GM12878 (cell line): ENCODE measurements at regions of chr1 and their contacts with region 1.

Region 1: DNA sequence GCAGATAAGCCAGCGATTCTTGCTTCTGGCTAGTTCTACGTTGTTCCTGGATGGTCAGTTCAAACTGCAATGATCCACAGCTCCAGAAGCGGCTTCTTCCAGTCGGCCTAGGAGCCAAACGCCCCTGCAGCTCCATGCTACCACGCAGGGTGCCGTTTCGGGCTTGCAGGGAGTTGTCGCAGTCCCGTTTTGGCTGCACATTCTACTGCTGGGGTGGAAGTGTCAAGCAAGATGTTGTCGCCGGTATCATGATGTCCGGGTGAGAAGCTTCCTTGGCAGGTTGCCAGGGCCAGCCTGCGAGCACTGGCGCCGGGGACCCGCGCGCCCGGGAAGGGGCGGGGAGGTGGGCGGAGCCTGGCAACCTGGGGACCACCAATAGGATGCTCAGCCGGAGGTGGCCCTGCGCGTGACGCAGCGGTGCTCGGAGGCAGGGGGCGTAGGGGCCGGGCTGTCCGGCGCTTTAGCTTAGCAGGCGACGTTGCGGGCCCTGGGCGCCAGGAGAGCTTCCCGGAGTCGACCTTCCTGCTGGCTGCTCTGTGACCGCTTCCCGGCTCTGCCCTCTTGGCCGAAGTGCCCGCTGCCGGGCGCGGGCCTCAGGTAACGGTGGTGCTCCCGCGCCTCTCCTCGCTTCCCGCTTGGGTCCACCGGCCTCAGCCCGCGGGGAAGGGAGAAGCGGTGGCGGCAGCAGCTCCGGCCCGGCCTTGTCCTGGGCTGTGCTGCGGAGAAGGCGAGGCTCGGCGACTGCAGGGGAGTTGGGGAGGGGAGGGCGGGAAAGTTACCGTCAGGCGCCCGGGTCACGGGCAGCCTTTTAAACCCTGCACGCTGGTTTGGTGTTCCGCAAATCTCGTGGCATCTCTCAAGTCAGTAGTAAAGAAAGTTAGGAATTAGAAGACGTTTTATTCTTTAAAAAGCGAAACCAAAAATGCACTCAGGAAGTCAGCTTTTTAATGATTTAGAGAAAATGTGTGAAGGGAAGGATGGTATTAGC is at the start of gene SOAT1:
- DNase-seq: peak; percentile 63
- ATAC-seq: peak; percentile 94
- H3K4me3 ChIP-seq: peak within 1 kb of the TSS; percentile 100
- H3K27ac ChIP-seq: peak within 1 kb of the TSS; percentile 78
- H3K4me1 ChIP-seq: no peaks in the 10 kb centered on the region
- H3K27me3 ChIP-seq: no peaks in the 10 kb centered on the region
- CTCF ChIP-seq: 0 out of 6 replicates have a peak, but pooled peaks of 1 of the 3 experiments have one; percentile 14
- EP300 ChIP-seq: no peak
- POLR2A ChIP-seq: peak; percentile 89
- RAD21 ChIP-seq: no peak
- polyA plus RNA-seq, gene SOAT1: 8.6 to 12.5 TPM

Region 2: GRCh38 chr1:179121159-179121938 is 172.3 kb before region 1 on chr1:
- CTCF ChIA-PET with region 1: interaction called, 47 read pairs
- POLR2A ChIA-PET with region 1: interaction called, 3 read pairs
- RAD21 ChIA-PET with region 1: interaction called, 17 read pairs
- SMC1A ChIA-PET with region 1: interaction called, 24 read pairs
- in situ Hi-C with region 1: no loop called
- intact Hi-C with region 1: loop called (anchors 1 kb)
- DNase-seq: no peak
- ATAC-seq: peak; percentile 67
- H3K4me3 ChIP-seq: no peak overlapping the region
- H3K27ac ChIP-seq: no peak overlapping the region
- H3K4me1 ChIP-seq: no peaks in the 10 kb centered on the region
- H3K27me3 ChIP-seq: no peaks in the 10 kb centered on the region
- CTCF ChIP-seq: peak; percentile 58 to 62 (median 61)
- EP300 ChIP-seq: no peak
- POLR2A ChIP-seq: no peak
- RAD21 ChIP-seq: peak; percentile 79

Region 3: DNA sequence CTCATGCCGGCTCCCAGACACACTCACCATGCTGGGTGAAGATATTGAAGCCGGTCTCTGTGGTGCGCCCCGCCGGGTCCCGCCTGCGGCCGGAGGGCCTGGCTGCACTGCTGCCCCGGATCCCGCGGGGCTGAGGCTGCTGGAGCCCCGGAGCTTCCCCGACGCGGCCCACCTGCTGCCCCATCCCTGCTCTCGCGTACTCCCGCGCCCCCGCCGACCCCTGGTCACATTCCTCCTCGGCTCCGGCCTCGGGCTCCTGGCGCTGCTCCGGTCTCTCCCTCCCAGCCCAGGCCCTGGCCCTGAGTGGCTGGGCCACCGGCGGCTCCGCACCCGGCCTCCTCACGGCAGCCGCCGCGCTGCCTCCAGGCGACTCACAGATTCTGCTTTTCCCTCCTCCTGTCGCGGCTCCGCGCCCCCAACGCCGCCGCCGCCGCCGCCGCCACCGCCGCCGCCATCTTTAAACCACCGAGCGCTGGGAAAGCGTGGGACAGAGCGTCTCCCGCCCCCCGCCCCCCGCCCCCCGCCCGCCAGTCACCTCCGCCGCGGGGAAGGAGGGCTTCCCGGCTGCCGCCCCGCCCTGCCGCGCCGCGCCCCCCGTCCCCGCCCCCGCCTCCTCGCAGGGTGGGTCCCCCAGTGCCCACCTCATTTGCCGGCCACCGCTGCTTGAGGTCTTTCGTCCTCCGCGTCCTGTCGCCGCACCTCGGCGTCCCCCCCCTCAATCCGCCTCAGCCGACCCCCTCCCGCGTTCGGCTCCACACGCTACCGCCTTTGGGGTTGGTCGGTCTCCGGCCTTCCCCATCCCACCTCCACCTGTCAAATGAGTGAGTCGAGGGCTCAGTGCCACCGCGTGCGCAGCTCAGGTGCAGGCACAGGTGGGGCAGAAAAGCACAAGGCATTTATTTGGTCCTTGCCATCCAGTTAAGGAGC is 64.2 kb before region 1 on chr1 and contains the start of gene ABL2:
- CTCF ChIA-PET with region 1: interaction called, 3 read pairs
- POLR2A ChIA-PET with region 1: no interaction called
- RAD21 ChIA-PET with region 1: interaction called, 4 read pairs
- SMC1A ChIA-PET with region 1: interaction called, 4 read pairs
- in situ Hi-C with region 1: no loop called
- intact Hi-C with region 1: loop called (anchors 5 kb)
- DNase-seq: no peak
- ATAC-seq: peak; percentile 80
- H3K4me3 ChIP-seq: peak within 1 kb of the TSS; percentile 88
- H3K27ac ChIP-seq: peak within 1 kb of the TSS; percentile 58
- H3K4me1 ChIP-seq: no peaks in the 10 kb centered on the region
- H3K27me3 ChIP-seq: no peaks in the 10 kb centered on the region
- CTCF ChIP-seq: no peak
- EP300 ChIP-seq: no peak
- POLR2A ChIP-seq: peak; percentile 65; the same call in 1 of the 2 replicates
- RAD21 ChIP-seq: no peak
- polyA plus RNA-seq, gene ABL2: 0.57 to 1.2 TPM

Region 4: DNA sequence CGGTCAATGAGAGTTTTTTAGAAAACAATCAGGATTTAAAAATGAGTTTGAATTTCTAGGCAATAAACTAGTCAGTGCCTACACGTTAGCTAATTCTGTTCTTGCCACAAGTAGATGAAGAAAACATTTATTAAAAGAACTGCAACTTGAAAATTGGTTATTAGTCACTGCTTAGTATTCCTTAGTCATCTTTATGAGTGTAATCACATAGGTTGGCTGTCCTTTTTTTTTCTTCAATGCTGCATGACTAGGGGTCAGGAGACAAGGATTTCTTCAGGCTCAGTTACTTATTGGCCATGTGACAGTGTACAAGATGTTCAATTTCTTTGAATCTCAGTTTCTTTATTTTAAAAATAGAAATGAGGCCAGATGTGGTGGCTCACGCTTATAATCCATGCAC is 17.1 kb after region 1 on chr1:
- CTCF ChIA-PET with region 1: interaction called, 6 read pairs
- POLR2A ChIA-PET with region 1: interaction called, 11 read pairs
- RAD21 ChIA-PET with region 1: no interaction called
- SMC1A ChIA-PET with region 1: interaction called, 21 read pairs
- in situ Hi-C with region 1: no loop called
- intact Hi-C with region 1: no loop called
- DNase-seq: no peak
- ATAC-seq: peak; percentile 15; the same call in 1 of the 3 replicates
- H3K4me3 ChIP-seq: no peak overlapping the region
- H3K27ac ChIP-seq: no peak overlapping the region
- H3K4me1 ChIP-seq: no peaks in the 10 kb centered on the region
- H3K27me3 ChIP-seq: no peaks in the 10 kb centered on the region
- CTCF ChIP-seq: no peak
- EP300 ChIP-seq: no peak
- POLR2A ChIP-seq: no peak
- RAD21 ChIP-seq: no peak

Region 5: DNA sequence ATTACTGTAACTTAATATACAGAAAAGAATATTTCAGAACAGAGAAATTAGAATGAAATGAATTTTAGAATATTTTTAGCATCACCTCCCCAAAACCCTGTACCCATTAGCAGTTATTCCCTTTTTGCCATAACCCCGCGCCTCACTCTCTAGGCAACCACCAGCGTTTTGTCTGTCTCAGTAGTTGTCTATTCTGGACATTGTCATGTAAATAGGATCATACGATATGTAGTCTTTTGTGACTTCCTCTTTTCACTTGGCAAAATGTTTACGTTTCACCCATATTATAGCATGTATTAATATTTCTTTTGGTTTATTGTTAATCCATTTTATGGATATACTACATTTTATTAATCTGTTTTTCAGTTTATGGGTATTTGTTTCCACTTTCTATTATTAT is 24.9 kb after region 1 on chr1:
- CTCF ChIA-PET with region 1: interaction called, 6 read pairs
- POLR2A ChIA-PET with region 1: interaction called, 11 read pairs
- RAD21 ChIA-PET with region 1: interaction called, 7 read pairs
- SMC1A ChIA-PET with region 1: interaction called, 21 read pairs
- in situ Hi-C with region 1: no loop called
- intact Hi-C with region 1: no loop called
- DNase-seq: no peak
- ATAC-seq: peak; percentile 73
- H3K4me3 ChIP-seq: no peak overlapping the region
- H3K27ac ChIP-seq: 0 out of 2 replicates have a peak overlapping the region, but pooled peaks have one; percentile 66
- H3K4me1 ChIP-seq: no peaks in the 10 kb centered on the region; the same call in 1 of the 2 replicates
- H3K27me3 ChIP-seq: no peaks in the 10 kb centered on the region
- CTCF ChIP-seq: no peak
- EP300 ChIP-seq: no peak
- POLR2A ChIP-seq: no peak
- RAD21 ChIP-seq: no peak